ENCODE measurements at regions of chr1 and their contacts with region 1.

Region 1: GRCh38 chr1:19651141-19651737 is 7.1 kb downstream of the NBL1 start:
- DNase-seq: peak; percentile 90
- H3K4me3 ChIP-seq: peak overlapping the region in 1 of 2 experiments; percentile 39; a peak in 1 of 4 replicates
- H3K27ac ChIP-seq: peak overlapping the region in 1 of 2 experiments; percentile 54; a peak in 2 of 4 replicates
- H3K4me1 ChIP-seq: peaks cover 0 to 35% of the 10 kb centered on the region in 2 experiments; a peak in 1 of 4 replicates
- H3K27me3 ChIP-seq: no peaks in the 10 kb centered on the region
- CTCF ChIP-seq: peak; percentile 69
- EP300 ChIP-seq: no peak
- RAD21 ChIP-seq: peak; percentile 92

Region 2: DNA sequence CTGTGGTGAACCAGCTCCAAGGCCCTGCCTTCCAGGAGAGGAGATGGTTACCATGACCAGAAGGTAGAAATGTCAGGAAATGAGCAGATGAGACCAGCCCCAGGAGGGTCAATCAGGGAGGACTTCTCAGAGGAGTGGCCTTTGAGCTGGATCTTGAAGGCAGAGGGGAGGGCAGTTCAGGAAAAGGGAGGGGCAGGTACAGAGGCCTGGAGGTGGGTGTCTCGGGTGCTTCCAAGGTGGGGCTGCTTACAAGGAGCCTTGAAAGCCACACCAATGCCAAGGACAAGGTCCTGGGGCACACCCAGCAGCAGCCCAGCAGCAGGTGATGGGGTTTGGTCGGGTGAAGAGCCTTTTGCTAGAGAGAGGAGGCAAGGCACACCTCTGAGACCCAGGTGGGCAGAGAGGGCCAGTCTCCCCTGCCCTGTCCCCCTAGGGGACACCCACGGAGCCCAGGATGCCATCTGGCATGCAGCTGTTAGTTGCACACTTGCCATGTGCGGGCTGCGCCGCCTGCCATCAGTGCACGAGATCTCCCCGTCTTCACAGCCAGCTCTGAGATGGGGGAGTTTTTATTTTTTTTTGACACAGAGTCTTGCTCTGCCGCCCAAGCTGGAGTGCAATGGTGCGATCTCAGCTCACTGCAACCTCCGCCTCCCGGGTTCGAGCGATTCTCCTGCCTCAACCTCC is 320.6 kb before region 1 on chr1:
- CTCF ChIA-PET with region 1: interaction called, 14 read pairs
- POLR2A ChIA-PET with region 1: no interaction called
- DNase-seq: peak; percentile 76
- H3K4me3 ChIP-seq: no peak overlapping the region
- H3K27ac ChIP-seq: no peak overlapping the region
- H3K4me1 ChIP-seq: peaks cover 0 to 4% of the 10 kb centered on the region in 2 experiments; a peak in 1 of 4 replicates
- H3K27me3 ChIP-seq: no peaks in the 10 kb centered on the region
- CTCF ChIP-seq: no peak
- EP300 ChIP-seq: no peak
- RAD21 ChIP-seq: no peak

Region 3: DNA sequence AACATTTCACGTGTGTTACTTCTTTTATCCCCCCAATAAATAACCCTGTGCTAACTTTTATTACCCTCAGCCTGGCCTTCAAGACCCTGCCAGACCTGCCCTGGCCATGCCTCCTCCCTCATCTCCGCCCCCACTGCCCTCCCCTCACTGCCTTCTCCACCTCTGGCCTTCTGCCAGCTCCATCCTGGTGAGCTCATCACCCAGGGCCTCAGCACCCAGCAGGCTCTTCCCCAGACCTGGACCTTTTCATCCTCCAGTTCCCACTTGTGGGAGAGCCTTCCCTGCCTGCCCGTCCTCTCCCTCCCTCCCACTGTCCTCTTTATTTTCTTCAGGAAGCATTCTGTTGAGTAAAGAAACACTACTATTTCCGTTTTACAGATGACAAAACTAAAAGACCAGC is 267.1 kb before region 1 on chr1:
- CTCF ChIA-PET with region 1: interaction called, 18 read pairs
- POLR2A ChIA-PET with region 1: interaction called, 6 read pairs
- DNase-seq: peak; percentile 75
- H3K4me3 ChIP-seq: no peak overlapping the region
- H3K27ac ChIP-seq: peak overlapping the region in 1 of 2 experiments; percentile 51; a peak in 2 of 4 replicates
- H3K4me1 ChIP-seq: peaks cover 13 to 41% of the 10 kb centered on the region in 2 experiments; a peak in 3 of 4 replicates
- H3K27me3 ChIP-seq: no peaks in the 10 kb centered on the region
- CTCF ChIP-seq: no peak
- EP300 ChIP-seq: no peak
- RAD21 ChIP-seq: no peak

Region 4: DNA sequence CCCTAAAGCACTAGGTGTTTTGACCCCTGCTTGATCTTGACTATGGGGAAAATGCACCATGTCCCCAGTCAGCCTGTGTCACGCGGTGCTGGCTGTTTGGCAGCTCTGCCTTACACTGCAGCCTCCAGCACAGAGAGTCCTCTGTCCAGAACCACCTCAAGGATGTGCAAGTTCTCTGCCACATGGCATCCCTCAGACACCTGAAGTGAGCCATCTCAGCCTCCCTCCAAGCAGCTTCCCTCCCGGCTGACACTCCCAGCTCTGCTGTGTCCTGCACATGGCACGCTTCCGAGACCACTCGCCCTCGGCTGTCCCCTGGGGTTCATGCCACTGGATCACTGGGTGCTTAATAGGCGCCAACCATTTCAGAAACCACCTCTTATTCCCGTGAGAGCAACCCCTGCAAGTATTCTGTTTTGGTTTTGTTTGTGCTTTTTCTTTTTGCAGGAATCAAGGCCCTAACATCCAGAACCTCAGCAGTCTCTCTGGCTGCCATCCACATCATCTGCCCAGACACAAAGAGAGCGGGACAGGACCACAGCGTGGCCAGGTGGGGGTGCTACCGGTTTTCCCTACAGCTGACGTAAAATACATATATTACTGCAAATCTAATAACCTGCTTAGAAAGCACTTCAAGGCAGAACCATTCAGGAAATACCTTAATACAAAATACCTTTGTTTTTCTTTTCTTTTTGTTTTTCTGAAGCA is 211.6 kb before region 1 on chr1:
- CTCF ChIA-PET with region 1: interaction called, 50 read pairs
- POLR2A ChIA-PET with region 1: no interaction called
- DNase-seq: peak; percentile 82
- H3K4me3 ChIP-seq: no peak overlapping the region
- H3K27ac ChIP-seq: peak overlapping the region; percentile 62 to 64
- H3K4me1 ChIP-seq: peaks cover 65 to 72% of the 10 kb centered on the region in 2 experiments
- H3K27me3 ChIP-seq: no peaks in the 10 kb centered on the region
- CTCF ChIP-seq: peak; percentile 53
- EP300 ChIP-seq: no peak
- RAD21 ChIP-seq: peak; percentile 79

Region 5: GRCh38 chr1:19485362-19486187 is 165.7 kb before region 1 on chr1 and contains the start of gene CAPZB:
- CTCF ChIA-PET with region 1: interaction called, 16 read pairs
- POLR2A ChIA-PET with region 1: no interaction called
- DNase-seq: peak; percentile 99
- H3K4me3 ChIP-seq: peak within 1 kb of the TSS; percentile 71 to 93
- H3K27ac ChIP-seq: peak within 1 kb of the TSS; percentile 74 to 94
- H3K4me1 ChIP-seq: peaks cover 34 to 44% of the 10 kb centered on the region in 2 experiments
- H3K27me3 ChIP-seq: no peaks in the 10 kb centered on the region
- CTCF ChIP-seq: no peak
- EP300 ChIP-seq: no peak
- RAD21 ChIP-seq: no peak
- polyA plus RNA-seq, gene CAPZB: 116 and 122 TPM in 2 replicates

Measured in SK-N-SH (cell line).